ENCODE measurements at regions of chr6 and their contacts with region 1.

Region 1: GRCh38 chr6:24991810-24992467 is 56.2 kb upstream of the RIPOR2 start:
- DNase-seq: peak; percentile 29 to 66 (median 49)
- ATAC-seq: peak; percentile 60 to 79
- H3K4me3 ChIP-seq: no peak overlapping the region
- H3K27ac ChIP-seq: no peak overlapping the region
- H3K4me1 ChIP-seq: peaks cover 2% of the 10 kb centered on the region
- H3K27me3 ChIP-seq: no peaks in the 10 kb centered on the region

Region 2: DNA sequence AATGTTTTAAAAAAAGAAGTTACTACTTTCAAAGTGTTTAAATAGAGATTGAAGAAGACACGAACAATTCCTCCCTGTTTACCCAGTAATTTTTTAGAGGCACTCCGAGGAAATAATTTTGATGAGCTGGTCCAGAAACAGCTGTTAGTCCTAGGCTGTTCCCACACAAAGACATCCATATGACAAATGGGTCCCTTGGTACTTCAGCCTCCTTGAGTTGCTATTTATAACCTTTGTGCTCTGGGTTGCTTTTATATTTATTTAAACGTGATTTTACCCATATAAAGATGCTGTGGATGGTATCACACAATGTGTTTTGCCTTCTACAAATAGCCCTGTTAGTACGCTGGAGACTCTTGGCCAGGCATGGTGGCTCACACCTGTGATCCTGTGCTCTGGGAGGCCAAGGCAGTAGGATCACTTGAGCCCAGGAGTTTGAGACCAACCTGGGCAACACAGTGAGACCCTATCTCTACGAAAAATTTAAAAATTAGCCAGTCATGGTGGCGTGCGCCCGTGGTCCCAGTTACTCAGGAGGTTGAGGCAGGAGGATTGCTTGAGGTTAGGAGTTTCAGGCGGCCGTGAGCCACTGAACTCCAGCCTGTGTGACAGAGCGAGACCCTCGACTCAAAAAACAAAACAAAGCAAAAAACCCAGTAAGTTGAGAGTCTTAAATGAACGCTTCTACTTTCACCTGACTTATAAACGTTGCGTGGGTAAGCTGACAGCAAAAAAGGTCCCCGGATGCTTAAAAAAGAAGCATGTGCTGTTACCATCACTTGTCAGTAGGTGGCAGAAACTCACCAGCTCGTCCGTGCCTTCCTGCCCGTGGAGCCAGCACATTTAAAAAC is 136.3 kb before region 1 on chr6:
- intact Hi-C with region 1: loop called (anchors 5 to 10 kb)
- DNase-seq: peak in 2 of 3 donors; percentile 44 to 75
- ATAC-seq: peak; percentile 66 to 68
- H3K4me3 ChIP-seq: no peak overlapping the region
- H3K27ac ChIP-seq: no peak overlapping the region
- H3K4me1 ChIP-seq: no peaks in the 10 kb centered on the region
- H3K27me3 ChIP-seq: no peaks in the 10 kb centered on the region

Region 3: GRCh38 chr6:24910961-24911712 is 80.8 kb before region 1 on chr6:
- intact Hi-C with region 1: loop called in 1 of 4 experiments (anchors 10 kb)
- DNase-seq: peak; percentile 65 to 84 (median 82)
- ATAC-seq: peak; percentile 74 to 75
- H3K4me3 ChIP-seq: peak overlapping the region; percentile 61
- H3K27ac ChIP-seq: no peak overlapping the region
- H3K4me1 ChIP-seq: peaks cover 2% of the 10 kb centered on the region
- H3K27me3 ChIP-seq: no peaks in the 10 kb centered on the region

Measured in right cardiac atrium (tissue), 5 donors.